GM10248 (cell line): ENCODE measurements at regions of chr22 and their contacts with region 1.

Region 1: GRCh38 chr22:37260901-37261336 is 16.9 kb upstream of the RAC2 start:
- DNase-seq: peak; percentile 77
- CTCF ChIP-seq: peak; percentile 86

Region 2: DNA sequence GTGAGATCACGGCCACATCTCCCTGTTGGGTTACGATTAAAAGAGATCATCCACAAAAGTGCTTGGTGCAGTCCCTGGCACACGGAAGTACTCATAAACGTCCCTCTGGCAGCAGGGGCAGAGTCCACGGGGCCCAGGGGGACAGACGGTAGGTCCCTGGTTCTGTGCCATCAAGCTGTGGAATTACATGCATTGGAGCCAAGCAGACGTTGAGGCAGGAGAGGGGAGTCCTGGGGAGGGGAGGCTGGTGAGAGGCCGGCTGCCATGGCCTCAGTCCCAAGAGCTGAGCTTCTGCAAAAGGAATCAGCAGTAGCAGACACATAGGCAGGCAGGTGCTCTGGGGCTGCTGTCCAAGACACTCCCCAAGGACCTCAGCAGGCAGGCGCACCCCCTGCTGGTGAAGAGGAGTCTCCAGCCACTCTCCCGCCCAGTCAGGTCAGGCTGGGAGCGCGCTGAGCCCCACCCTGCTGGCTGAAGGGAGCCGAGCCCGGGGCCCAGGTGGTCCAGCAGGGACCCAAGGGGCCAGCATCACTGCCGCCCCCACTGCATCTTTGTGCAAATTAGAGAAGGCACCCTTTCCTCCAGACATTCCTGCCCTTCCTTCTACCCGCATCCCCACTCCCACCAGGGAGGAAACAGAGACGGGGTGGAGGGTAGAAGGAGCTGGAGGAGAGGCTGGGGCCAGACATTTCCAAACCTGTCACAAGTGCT is 216.9 kb before region 1 on chr22:
- CTCF ChIA-PET with region 1: interaction called, 11 read pairs
- POLR2A ChIA-PET with region 1: no interaction called
- DNase-seq: peak; percentile 91
- CTCF ChIP-seq: peak; percentile 88

Region 3: DNA sequence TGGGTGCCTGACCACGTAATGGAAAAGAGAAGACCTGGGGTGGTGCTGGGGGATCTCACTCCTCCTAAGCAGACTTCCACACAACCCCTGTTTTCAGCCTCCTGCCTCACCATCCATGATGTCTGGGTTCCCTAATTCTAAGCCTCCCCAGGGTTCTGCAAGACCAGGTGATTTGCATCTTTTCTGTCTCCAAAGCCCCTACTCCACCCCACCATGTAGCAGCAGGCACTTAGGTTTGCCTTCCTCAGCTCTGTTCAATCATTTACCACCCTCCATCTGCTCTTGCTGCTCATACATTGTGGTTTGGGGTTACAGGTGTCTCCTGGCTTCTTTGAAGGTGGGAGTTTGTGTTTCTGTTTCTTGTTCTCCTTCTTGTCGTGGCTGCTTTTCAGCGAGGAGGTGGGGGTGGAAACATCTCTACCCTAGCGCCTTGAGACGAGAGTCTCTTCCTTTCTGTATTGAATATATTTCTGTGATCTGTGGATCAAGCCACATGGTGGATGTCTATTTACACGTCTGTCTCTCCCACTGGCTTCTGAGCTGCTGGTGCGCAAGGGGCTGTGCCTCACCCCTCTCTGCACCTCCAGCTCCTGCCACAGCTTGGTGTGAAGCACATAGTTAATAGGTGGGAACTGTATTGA is 42.0 kb before region 1 on chr22:
- CTCF ChIA-PET with region 1: interaction called, 12 read pairs
- POLR2A ChIA-PET with region 1: no interaction called
- DNase-seq: peak; percentile 85
- CTCF ChIP-seq: no peak

Region 4: GRCh38 chr22:37244114-37244921 is 16.6 kb before region 1 on chr22 and contains the start of gene RAC2:
- CTCF ChIA-PET with region 1: interaction called, 195 read pairs
- POLR2A ChIA-PET with region 1: no interaction called
- DNase-seq: peak; percentile 88
- CTCF ChIP-seq: no peak

Region 5: DNA sequence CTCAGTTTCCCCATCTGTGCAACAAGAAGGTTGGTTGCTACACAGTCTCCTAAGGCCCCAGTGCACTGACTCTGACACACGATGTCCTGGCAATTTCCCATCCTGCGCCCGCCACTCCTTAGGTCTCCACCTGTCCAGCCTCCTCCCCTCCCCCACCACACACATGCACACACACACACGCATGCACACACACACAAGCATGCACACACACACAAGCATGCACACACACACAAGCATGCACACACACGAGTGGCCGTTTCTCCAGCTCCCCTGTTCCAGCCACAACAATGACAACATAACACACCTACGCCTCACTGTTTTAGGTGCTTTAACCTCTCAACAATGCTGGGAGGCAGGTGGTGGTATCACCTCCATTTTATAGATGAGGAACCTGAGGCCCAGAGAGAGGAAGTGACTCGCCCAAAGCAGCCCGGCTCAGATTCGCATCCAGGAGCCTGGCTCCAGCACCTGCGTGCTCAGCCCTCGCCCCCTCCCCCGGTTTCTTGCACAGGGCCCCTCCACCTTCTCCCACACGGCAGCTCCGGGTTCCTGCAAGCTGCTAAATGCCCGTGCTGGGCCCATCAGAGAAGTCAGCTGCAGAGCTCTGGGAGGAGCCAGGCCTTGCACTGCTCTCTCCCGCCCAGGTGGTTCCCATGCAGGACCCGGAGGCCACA is 34.4 kb after region 1 on chr22:
- CTCF ChIA-PET with region 1: interaction called, 17 read pairs
- POLR2A ChIA-PET with region 1: no interaction called
- DNase-seq: no peak
- CTCF ChIP-seq: no peak

Region 6: DNA sequence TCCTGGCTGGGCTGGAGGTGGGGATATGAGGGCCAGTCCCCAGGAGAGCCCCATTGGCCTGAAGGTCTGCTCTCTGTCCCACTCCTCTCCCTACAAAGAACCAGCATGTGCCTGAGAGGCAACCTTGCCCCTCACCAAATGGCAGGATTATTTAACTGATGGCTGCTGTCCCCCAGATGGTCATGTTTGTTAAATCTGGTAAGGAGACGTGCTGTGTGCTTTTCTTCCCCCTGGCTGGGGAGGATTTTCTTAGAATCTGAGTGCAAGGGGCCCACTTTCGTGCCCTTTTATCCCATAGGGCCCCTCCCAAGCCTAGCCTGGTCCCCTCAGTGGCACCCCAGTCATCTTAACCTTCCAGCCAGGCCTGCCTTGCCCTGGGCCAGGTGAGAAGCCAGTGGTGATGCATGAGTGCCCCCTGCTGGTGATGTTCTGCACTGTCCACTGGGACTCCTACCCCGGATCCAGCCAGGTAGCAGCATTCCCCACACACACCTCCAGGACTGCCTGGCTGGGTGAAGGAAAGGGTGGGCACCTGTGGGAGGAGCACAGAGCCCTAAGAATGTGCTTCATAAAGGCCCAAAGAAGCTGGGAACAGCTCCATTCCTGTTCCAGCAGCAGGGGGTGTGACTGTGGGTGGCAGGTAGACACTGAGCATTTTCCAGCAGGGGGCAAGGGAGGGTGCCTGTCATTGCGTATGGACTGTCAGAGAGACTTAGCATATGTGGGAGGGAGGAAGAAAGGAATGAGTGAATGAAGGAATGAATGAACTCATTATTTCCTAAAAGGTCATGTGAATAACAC is 196.4 kb after region 1 on chr22:
- CTCF ChIA-PET with region 1: interaction called, 18 read pairs
- POLR2A ChIA-PET with region 1: no interaction called
- DNase-seq: peak; percentile 87
- CTCF ChIP-seq: peak; percentile 76